Heart left ventricle (tissue), 16 donors: ENCODE measurements at regions of chr12 and their contacts with region 1.

Region 1: GRCh38 chr12:120580787-120581723 is at the start of gene POP5:
- DNase-seq: peak; percentile 96 to 97 (median 97)
- ATAC-seq: peak; percentile 92 to 97 (median 94)
- H3K4me3 ChIP-seq: peak within 1 kb of the TSS; percentile 61 to 97 (median 81)
- H3K27ac ChIP-seq: peak within 1 kb of the TSS in 11 of 12 donors; percentile 47 to 84 (median 70)
- H3K4me1 ChIP-seq: peaks cover 0 to 36% (median 26%) of the 10 kb centered on the region in 12 donors
- H3K27me3 ChIP-seq: peaks cover 0 to 9% (median 0%) of the 10 kb centered on the region in 9 donors
- CTCF ChIP-seq: no peak
- POLR2A ChIP-seq: peak in 1 of 2 donors; percentile 77
- total RNA-seq, gene POP5: 20.6 to 46.6 (median 36.3) TPM

Region 2: DNA sequence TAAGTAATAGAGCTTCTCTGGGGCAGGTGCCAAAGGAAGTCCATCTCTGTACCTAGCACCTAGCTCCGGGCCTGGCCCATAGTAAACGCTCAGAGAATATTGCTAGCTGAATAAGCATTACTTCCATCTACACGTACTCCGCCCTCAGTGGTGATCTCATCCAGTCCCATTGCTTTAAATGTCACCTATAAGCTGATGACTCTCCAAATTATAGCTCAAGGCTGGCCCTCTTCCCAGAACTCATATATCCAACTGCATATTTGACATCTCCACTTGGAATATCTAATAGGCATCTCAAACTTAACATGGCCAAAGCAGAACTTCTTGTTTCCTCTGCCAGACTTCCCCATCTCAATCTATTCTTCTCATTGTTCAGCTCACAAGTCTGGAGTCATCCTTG is 92.0 kb before region 1 on chr12:
- intact Hi-C with region 1: no loop called
- DNase-seq: no peak
- ATAC-seq: no peak
- H3K4me3 ChIP-seq: no peak overlapping the region
- H3K27ac ChIP-seq: no peak overlapping the region
- H3K4me1 ChIP-seq: peaks cover 0 to 6% (median 0%) of the 10 kb centered on the region in 12 donors
- H3K27me3 ChIP-seq: no peaks in the 10 kb centered on the region
- CTCF ChIP-seq: no peak
- POLR2A ChIP-seq: no peak

Region 3: GRCh38 chr12:120534203-120534702 is 46.8 kb before region 1 on chr12 and contains the start of gene RNF10:
- intact Hi-C with region 1: loop called in 2 of 10 experiments (anchors 5 to 10 kb)
- DNase-seq: peak; percentile 76 to 88 (median 83)
- ATAC-seq: peak; percentile 59 to 83 (median 74)
- H3K4me3 ChIP-seq: peak within 1 kb of the TSS; percentile 68 to 99 (median 94)
- H3K27ac ChIP-seq: peak within 1 kb of the TSS; percentile 94 to 98 (median 96)
- H3K4me1 ChIP-seq: peaks cover 12 to 50% (median 38%) of the 10 kb centered on the region in 12 donors
- H3K27me3 ChIP-seq: no peaks in the 10 kb centered on the region
- CTCF ChIP-seq: no peak
- POLR2A ChIP-seq: peak; percentile 97 to 98
- total RNA-seq, gene RNF10: 165 to 363 (median 278) TPM

Region 4: GRCh38 chr12:120710031-120710804 is 129.2 kb after region 1 on chr12 and contains the start of gene UNC119B:
- intact Hi-C with region 1: loop called (anchors 1 to 5 kb)
- DNase-seq: peak; percentile 71 to 89 (median 82)
- ATAC-seq: peak; percentile 47 to 95 (median 90)
- H3K4me3 ChIP-seq: peak within 1 kb of the TSS; percentile 54 to 99 (median 82)
- H3K27ac ChIP-seq: peak within 1 kb of the TSS; percentile 70 to 95 (median 90)
- H3K4me1 ChIP-seq: peaks cover 4 to 35% (median 27%) of the 10 kb centered on the region in 12 donors
- H3K27me3 ChIP-seq: no peaks in the 10 kb centered on the region
- CTCF ChIP-seq: no peak
- POLR2A ChIP-seq: no peak
- total RNA-seq, gene UNC119B: 9.1 to 12.6 (median 10.7) TPM

Region 5: DNA sequence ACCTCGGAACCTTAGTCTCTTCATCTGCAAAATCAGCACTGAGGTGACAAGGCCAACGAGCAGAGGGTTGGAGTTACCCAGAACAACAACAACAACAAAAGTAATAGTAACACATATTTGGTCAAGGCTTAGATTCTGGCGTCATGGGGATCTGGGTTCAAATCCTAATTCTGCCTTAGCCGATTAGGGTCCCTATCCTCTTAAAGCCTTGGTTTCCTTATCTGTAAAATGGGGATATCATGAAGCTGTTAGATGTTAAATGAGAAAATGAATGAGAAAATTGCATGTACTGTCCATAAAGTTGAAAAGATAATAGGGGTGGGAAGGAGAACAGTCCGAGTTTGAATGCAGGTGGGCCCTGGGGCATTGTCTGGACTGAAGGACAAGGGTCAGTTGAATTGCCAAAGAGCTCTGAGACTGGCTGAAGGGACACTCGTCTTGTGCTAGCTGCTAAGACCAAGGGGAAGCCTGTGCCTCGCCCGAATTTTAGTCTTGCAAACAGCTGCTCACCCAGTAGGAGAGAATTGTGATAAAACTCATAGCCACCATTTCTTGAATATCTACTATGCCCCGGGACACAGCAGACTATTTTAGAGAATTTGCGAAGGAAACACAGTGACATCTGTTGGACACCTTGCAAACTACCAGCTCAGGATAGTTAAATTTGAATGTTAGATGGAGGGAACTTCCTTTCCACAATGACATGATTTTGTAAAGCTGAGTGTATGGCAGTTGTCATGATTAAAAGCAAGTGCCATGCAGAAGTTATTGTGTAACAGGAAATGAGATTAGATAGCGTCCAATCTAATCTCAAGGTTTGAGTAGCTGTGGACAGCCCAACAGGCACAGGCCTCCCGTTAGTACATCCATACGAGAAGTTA is 390.5 kb after region 1 on chr12:
- intact Hi-C with region 1: loop called (anchors 1 to 5 kb)
- DNase-seq: peak in 2 of 5 donors; percentile 21 to 33
- ATAC-seq: peak; percentile 74 to 85 (median 78)
- H3K4me3 ChIP-seq: no peak overlapping the region
- H3K27ac ChIP-seq: no peak overlapping the region
- H3K4me1 ChIP-seq: no peaks in the 10 kb centered on the region
- H3K27me3 ChIP-seq: no peaks in the 10 kb centered on the region
- CTCF ChIP-seq: peak; percentile 61 to 82 (median 75)
- POLR2A ChIP-seq: no peak

Region 6: GRCh38 chr12:121095544-121096198 is 514.6 kb after region 1 on chr12:
- intact Hi-C with region 1: loop called in 7 of 10 experiments (anchors 1 to 10 kb)
- DNase-seq: peak; percentile 51 to 89 (median 72)
- ATAC-seq: peak; percentile 58 to 94 (median 88)
- H3K4me3 ChIP-seq: peak overlapping the region in 10 of 12 donors; percentile 28 to 55 (median 42)
- H3K27ac ChIP-seq: peak overlapping the region in 1 of 12 donors; percentile 46
- H3K4me1 ChIP-seq: peaks cover 0 to 20% (median 9%) of the 10 kb centered on the region in 12 donors
- H3K27me3 ChIP-seq: no peaks in the 10 kb centered on the region
- CTCF ChIP-seq: peak; percentile 75 to 92 (median 85)
- POLR2A ChIP-seq: no peak